Lower leg skin (tissue), 4 donors: ENCODE measurements at regions of chr6 and their contacts with region 1.

Region 1: GRCh38 chr6:21539621-21540100 is 53.9 kb upstream of the SOX4 start:
- DNase-seq: no peak
- H3K4me3 ChIP-seq: no peak overlapping the region
- CTCF ChIP-seq: no peak
- POLR2A ChIP-seq: no peak

Region 2: DNA sequence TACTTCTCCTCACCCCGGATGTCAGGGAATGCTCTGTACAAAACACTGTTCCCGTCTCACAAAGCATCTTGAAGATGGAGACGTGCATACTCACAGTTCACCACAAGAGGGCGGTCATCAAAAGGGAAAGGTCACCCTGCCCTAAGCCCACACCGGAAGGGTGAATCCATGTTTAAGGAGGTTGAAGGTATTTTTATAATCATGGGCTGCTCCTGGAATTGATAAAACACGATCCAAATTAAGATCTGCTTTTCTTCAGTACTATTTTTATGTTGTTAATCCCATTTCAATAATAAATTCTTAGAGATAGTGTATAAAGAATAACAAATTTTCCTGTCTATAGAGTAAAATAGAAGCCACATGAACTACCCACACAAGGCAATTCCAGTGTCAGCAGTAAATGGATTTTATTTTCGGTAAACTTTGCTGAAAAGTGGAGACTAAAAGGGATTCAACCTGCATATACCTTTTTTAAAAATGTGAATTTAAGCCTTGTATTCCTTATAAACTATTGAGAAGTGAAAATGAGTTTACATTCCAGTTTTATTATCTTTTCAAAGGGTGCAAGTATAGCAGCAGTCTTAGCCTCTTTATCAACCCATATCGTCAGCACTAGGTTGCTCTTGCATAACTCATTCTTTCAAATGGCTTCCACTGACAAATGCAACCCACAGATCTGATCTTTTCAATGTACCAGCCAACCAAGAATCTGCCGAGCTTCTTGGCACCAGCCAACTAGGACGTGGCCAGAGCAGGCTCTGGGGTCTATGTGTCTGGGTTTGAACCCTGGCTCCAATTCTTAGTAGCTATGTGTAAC is 1247.7 kb before region 1 on chr6:
- intact Hi-C with region 1: loop called (anchors 5 kb)
- DNase-seq: peak; percentile 84 to 94
- H3K4me3 ChIP-seq: no peak overlapping the region
- CTCF ChIP-seq: peak in 1 of 3 donors; percentile 80
- POLR2A ChIP-seq: no peak

Region 3: DNA sequence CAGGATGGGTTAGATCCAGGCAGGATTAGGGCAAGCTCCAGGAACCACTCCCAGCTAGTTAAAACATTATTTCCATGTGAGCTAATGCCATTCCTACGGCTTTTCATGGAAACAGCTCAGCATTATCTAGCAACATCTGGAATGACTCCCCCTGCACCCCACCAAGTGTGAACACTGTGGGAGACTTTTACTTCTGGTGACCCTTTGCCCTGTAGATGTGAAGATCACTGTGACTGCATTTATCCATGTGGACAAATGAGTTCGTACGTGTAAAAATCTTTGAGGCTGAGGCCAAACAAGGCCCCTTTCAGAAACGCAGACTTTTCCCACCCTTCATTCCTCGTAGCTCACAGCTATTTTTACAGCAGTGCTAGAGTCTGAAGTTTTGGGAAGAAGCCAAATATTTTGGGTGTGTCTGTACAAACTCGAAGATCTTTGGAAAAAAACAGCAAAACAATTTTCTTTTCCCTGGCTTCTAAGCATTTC is 167.9 kb before region 1 on chr6:
- intact Hi-C with region 1: no loop called
- DNase-seq: peak in 1 of 2 donors; percentile 81
- H3K4me3 ChIP-seq: no peak overlapping the region
- CTCF ChIP-seq: no peak
- POLR2A ChIP-seq: no peak